AG04449 (cell line): ENCODE measurements at regions of chr9 and their contacts with region 1.

Region 1: DNA sequence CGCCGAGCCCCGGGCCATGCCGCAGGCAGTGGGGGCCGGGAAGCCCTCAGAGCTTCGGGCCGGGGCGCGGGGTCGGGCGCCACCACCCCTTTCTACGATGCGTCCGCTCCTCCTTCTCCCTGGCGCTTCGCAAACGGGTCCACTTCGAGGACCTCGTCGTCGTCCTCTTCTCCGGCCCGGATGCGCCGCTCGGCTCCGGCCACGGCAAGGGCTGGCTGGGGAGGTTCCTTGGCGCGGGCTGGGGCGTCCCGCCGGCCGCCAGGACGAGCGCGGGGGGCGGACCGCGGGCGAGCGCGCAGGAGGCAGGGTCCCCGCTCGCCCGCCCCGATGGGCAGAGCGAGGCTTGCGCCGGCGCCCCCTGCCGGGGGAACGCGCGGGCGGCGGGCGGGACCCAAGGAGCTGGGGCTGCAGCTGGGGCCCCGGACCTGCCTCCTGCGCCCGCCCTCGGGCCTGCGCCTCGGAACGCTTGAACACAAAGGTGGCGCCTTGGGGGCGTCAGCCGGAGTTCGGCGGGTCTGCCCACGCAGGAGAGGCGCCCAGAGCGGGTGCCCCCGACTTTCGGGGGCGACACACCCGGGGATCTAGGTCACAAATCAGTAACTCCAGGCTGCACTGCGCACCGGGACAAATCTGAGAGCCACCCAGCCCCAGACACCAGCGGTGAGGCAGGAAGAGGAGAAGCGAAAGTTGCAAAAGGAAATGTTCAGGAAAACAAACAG is at the start of gene ROR2:
- DNase-seq: no peak
- H3K4me3 ChIP-seq: peak within 1 kb of the TSS; percentile 60
- CTCF ChIP-seq: peak; percentile 48

Region 2: GRCh38 chr9:91734371-91734981 is 215.6 kb before region 1 on chr9:
- CTCF ChIA-PET with region 1: interaction called, 13 read pairs
- POLR2A ChIA-PET with region 1: no interaction called
- DNase-seq: no peak
- H3K4me3 ChIP-seq: no peak overlapping the region
- CTCF ChIP-seq: peak; percentile 96

Region 3: GRCh38 chr9:91775011-91775707 is 174.9 kb before region 1 on chr9:
- CTCF ChIA-PET with region 1: interaction called, 114 read pairs
- POLR2A ChIA-PET with region 1: interaction called, 3 read pairs
- DNase-seq: no peak
- H3K4me3 ChIP-seq: no peak overlapping the region
- CTCF ChIP-seq: peak; percentile 92

Region 4: GRCh38 chr9:91896513-91897121 is 53.5 kb before region 1 on chr9:
- CTCF ChIA-PET with region 1: no interaction called
- POLR2A ChIA-PET with region 1: no interaction called
- DNase-seq: no peak
- H3K4me3 ChIP-seq: no peak overlapping the region
- CTCF ChIP-seq: no peak

Region 5: GRCh38 chr9:91966503-91966902 is 16.4 kb after region 1 on chr9:
- CTCF ChIA-PET with region 1: interaction called, 24 read pairs
- POLR2A ChIA-PET with region 1: no interaction called
- DNase-seq: no peak
- H3K4me3 ChIP-seq: no peak overlapping the region
- CTCF ChIP-seq: no peak

Region 6: DNA sequence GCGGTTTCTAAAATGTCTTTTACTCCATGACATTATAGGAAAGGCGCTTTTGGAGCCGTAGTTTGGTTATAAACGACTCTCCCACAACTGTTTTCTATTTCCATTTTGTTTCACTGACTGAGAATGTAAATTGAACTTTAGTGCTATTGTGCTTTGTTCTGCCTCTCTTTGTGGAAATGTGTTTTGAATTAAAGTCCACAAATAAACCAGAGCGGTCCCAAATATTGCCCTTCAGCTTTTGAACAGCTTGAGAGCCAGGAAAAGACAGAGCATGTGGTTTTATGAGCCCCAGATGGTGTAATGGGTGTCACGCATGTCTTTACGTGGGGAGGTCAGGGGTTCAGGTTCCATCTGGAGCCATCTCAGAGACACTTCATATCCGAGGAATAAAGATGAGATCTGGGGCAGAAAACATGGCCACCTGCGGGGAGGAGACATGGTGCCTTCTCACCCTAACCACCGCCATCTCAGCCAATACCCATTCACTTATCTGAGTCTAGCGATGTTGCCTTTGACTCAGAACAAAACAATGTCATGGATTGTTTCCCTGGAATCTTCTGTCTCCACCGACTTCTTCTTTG is 42.4 kb after region 1 on chr9:
- CTCF ChIA-PET with region 1: interaction called, 10 read pairs
- POLR2A ChIA-PET with region 1: no interaction called
- DNase-seq: no peak
- H3K4me3 ChIP-seq: no peak overlapping the region
- CTCF ChIP-seq: no peak